Caco-2 (cell line): ENCODE measurements at regions of chr18 and their contacts with region 1.

Region 1: GRCh38 chr18:34738176-34738894 is 28.2 kb downstream of the DTNA start:
- DNase-seq: peak; percentile 37 to 48
- H3K4me3 ChIP-seq: no peak overlapping the region
- H3K4me3 Mint-ChIP-seq: peak overlapping the region; percentile 65
- H3K27ac Mint-ChIP-seq: peak overlapping the region; percentile 95
- H3K4me1 ChIP-seq: peaks cover 14% of the 10 kb centered on the region
- H3K4me1 Mint-ChIP-seq: peaks cover 7% of the 10 kb centered on the region
- H3K27me3 ChIP-seq: no peaks in the 10 kb centered on the region
- H3K27me3 Mint-ChIP-seq: no peaks in the 10 kb centered on the region
- CTCF ChIP-seq: no peak

Region 2: GRCh38 chr18:34661464-34662111 is 76.7 kb before region 1 on chr18:
- CTCF ChIA-PET with region 1: interaction called, 4 read pairs
- POLR2A ChIA-PET with region 1: no interaction called
- intact Hi-C with region 1: loop called (anchors 1 kb)
- DNase-seq: peak in 1 of 2 experiments; percentile 30
- H3K4me3 ChIP-seq: no peak overlapping the region
- H3K4me3 Mint-ChIP-seq: no peak overlapping the region
- H3K27ac Mint-ChIP-seq: no peak overlapping the region
- H3K4me1 ChIP-seq: no peaks in the 10 kb centered on the region
- H3K4me1 Mint-ChIP-seq: peaks cover 6% of the 10 kb centered on the region
- H3K27me3 ChIP-seq: no peaks in the 10 kb centered on the region
- H3K27me3 Mint-ChIP-seq: no peaks in the 10 kb centered on the region
- CTCF ChIP-seq: peak; percentile 46 to 60

Region 3: DNA sequence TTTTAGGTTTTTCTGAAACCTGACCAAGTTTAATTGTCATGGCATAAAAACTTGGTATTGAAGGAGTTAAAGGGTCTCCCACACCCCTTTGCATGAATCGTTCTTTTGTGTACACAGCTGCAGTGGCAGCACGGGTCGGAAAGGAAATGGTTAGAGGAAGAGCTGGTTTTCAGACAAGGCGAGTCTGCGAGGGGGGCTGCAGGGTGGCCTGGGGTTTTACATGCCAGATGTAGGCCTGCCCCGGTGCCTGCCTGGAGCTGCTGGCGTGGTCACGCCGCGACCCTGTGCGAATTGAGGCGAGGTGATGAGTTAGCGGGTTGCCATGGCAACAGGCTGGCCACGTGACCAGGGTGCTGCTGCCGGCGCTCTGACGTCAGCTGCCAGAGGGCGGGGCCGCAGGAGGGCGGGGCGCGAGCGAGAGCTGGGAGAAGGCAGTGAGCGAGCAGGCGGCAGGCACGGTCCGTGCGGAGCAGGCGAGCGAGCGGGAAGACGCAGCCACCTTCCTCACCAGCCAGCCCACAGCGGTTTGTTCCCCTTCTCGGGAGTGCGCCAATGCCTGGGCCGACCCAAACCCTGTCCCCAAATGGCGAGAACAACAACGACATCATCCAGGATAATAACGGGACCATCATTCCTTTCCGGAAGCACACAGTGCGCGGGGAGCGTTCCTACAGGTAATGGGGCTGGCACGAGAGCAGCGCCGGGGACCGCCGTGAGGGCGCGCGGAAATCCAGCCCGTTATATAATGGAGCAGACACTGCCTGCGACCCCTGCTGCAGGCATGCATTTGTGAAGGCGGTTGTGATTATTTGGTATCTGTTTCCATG is 302.9 kb after region 1 on chr18 and contains the start of gene MAPRE2:
- CTCF ChIA-PET with region 1: no interaction called
- POLR2A ChIA-PET with region 1: no interaction called
- intact Hi-C with region 1: no loop called
- DNase-seq: peak; percentile 93
- H3K4me3 ChIP-seq: peak within 1 kb of the TSS; percentile 73
- H3K4me3 Mint-ChIP-seq: peak within 1 kb of the TSS; percentile 91
- H3K27ac Mint-ChIP-seq: peak within 1 kb of the TSS; percentile 96
- H3K4me1 ChIP-seq: no peaks in the 10 kb centered on the region; the same call in 1 of the 2 replicates
- H3K4me1 Mint-ChIP-seq: no peaks in the 10 kb centered on the region
- H3K27me3 ChIP-seq: no peaks in the 10 kb centered on the region
- H3K27me3 Mint-ChIP-seq: no peaks in the 10 kb centered on the region
- CTCF ChIP-seq: no peak
- total RNA-seq, gene MAPRE2: 8.4 and 9.3 TPM in 2 replicates